Adrenal gland (tissue), 19 donors: ENCODE measurements at regions of chr10 and their contacts with region 1.

Region 1: DNA sequence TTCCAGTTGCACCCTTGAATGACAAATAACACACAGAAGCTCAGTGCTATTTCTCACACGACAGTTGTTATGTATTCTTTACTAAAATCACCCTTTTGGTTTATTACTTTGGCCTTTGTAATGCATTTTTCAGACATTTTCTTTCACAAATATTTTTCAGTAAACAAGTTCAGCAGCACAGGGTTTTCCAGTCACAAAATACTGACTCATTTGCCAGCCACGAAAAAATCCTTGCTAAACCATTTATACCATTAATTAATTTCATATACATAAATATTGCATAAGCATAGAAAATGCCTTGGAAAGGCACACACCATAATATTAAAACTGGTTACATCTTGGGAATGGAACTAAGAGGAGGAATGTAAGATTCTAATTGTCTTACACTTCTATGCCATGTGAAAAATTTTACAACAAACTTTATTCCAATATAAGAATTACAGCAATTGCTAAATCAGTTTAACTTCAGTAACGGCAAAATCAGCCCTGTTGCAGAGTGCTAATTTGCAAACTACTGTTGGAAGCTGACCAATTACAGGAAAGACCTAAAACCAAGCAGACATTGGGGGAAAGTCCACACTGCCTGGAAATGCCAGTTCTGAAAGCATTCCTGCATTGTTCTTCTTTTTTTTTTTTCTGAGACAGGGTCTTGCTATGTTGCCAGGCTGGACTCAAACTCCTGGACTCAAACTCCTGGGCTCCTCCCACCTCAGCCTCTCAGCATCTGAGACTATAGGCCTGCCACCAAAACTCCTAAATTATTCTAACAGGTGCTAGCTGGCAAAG is 31.6 kb upstream of the PBLD start:
- DNase-seq: no peak
- H3K4me3 ChIP-seq: no peak overlapping the region
- H3K27ac ChIP-seq: no peak overlapping the region
- H3K4me1 ChIP-seq: no peaks in the 10 kb centered on the region
- H3K27me3 ChIP-seq: no peaks in the 10 kb centered on the region
- CTCF ChIP-seq: no peak
- POLR2A ChIP-seq: no peak

Region 2: GRCh38 chr10:67988606-67989005 is 375.7 kb before region 1 on chr10:
- intact Hi-C with region 1: loop called in 1 of 2 experiments (anchors 10 kb)
- DNase-seq: no peak
- H3K4me3 ChIP-seq: no peak overlapping the region
- H3K27ac ChIP-seq: no peak overlapping the region
- H3K4me1 ChIP-seq: no peaks in the 10 kb centered on the region
- H3K27me3 ChIP-seq: no peaks in the 10 kb centered on the region
- CTCF ChIP-seq: no peak
- POLR2A ChIP-seq: no peak

Region 3: DNA sequence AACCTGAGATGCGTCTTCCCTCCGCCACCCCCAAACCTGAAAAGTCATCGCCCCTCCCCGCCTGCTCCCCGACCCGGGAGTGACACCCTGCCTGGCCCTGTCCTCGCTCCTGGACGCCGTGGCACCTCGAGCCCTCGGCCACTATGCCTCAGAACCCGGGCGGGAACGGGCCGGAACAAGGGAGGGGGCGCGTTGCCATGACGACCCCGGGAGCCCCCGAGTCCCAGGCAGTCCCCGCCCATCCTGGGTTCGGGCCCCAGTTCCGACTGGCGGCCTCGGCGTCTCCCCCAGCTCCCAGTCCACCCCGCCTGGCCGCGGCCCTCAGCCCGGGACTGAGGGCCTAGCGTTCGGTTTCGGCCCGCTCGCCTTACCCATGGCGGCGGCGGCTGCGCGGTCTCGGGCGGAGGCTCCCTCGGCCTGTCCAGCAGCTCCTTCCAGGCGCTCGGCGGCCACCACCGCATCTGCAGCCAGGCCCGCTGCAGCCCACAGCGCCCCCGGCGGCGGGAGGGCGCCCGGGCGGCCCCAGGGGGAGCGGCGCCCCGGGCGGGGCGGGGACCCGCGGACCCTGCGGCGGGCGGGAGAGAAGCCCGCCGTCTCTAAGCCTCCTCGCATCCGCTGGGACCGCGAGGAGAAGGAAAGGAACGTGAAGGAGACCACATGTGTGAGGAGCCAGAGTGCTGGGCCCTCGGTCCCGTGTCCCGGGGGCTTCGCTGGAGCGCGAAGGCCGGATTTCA is 42.7 kb after region 1 on chr10 and contains the start of gene RUFY2:
- intact Hi-C with region 1: no loop called
- DNase-seq: peak; percentile 72 to 83 (median 80)
- H3K4me3 ChIP-seq: peak within 1 kb of the TSS; percentile 40 to 100 (median 74)
- H3K27ac ChIP-seq: peak within 1 kb of the TSS in 4 of 5 donors; percentile 73 to 92 (median 79)
- H3K4me1 ChIP-seq: peaks cover 0 to 15% of the 10 kb centered on the region in 2 donors
- H3K27me3 ChIP-seq: no peaks in the 10 kb centered on the region
- CTCF ChIP-seq: peak in 5 of 6 experiments; percentile 44 to 96 (median 92)
- POLR2A ChIP-seq: peak; percentile 57 to 71
- total RNA-seq, gene RUFY2: 6.5 to 26.0 (median 17.0) TPM